ENCODE measurements at regions of chr22 and their contacts with region 1.

Region 1: DNA sequence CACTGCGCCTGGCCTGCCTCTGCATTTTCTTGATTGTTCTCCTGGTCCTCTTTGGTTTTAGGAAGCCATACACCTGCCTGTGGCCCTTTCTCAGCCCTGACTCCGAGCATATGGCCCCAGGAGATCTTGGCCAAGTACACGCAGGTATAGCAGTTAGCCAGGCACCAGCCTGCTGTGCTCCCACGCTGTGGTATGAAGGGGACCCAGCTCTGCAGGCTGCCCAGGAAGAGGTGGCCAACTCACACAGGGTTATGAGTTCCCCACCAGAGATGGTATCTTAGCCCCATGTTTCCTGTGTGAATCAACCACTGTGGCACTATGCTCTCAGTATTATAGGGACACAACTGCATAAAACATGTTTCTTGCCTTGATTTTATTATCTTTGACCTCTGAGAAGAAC is 31.1 kb downstream of the SGSM3 start:
- DNase-seq: peak; percentile 80
- H3K4me3 Mint-ChIP-seq: peak overlapping the region; percentile 69
- H3K27ac Mint-ChIP-seq: peak overlapping the region; percentile 84
- H3K4me1 Mint-ChIP-seq: peaks cover 42% of the 10 kb centered on the region
- H3K27me3 Mint-ChIP-seq: no peaks in the 10 kb centered on the region

Region 2: GRCh38 chr22:40385036-40385782 is 16.3 kb before region 1 on chr22:
- intact Hi-C with region 1: loop called (anchors 1 kb)
- DNase-seq: peak; percentile 80
- H3K4me3 Mint-ChIP-seq: peak overlapping the region; percentile 77
- H3K27ac Mint-ChIP-seq: peak overlapping the region; percentile 89
- H3K4me1 Mint-ChIP-seq: peaks cover 47% of the 10 kb centered on the region
- H3K27me3 Mint-ChIP-seq: no peaks in the 10 kb centered on the region

Region 3: DNA sequence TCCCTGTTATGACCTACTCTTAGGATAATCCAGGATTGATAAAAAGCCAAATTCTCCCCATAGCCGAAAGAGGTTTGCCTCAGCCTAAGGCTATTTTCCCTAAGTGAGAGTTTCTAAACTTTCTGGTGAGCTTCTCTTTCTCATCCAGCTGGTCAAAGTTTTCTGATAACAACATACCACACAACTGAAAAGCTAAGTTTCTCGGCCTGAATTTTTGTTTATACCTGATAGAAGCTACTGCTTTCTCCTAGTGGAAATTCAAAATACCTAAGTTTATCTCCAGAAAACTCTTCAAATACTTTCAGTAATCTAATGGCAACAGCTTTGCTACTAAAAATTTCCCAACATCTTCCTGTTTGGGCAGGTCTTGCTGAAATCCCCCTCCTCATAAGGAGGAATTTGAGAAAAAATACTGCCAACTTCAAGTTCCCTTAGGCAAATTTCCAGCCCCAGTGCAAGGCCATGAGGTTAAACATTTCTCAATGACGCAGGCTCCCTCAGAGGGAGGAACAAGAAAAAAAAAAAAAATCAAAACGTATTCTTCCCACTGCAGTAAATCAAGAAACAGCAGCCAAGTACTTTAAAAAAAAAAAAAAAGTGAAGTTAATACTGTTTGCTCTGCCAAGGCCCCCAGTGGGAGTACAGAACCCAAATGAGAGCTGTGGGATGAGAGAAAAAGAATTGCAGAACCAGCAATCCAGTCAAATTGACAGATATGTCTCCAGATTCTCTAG is 108.0 kb after region 1 on chr22:
- intact Hi-C with region 1: no loop called
- DNase-seq: no peak
- H3K4me3 Mint-ChIP-seq: no peak overlapping the region
- H3K27ac Mint-ChIP-seq: no peak overlapping the region
- H3K4me1 Mint-ChIP-seq: peaks cover 9% of the 10 kb centered on the region
- H3K27me3 Mint-ChIP-seq: no peaks in the 10 kb centered on the region

Measured in activated CD4-positive, alpha-beta T cell treated with anti-CD3 and anti-CD28 coated beads, Interleukin-2, amount 10 ng/mL, durations not matched to agents 24 days and 14 days (primary cell).